ENCODE measurements at regions of chr4 and their contacts with region 1.

Region 1: DNA sequence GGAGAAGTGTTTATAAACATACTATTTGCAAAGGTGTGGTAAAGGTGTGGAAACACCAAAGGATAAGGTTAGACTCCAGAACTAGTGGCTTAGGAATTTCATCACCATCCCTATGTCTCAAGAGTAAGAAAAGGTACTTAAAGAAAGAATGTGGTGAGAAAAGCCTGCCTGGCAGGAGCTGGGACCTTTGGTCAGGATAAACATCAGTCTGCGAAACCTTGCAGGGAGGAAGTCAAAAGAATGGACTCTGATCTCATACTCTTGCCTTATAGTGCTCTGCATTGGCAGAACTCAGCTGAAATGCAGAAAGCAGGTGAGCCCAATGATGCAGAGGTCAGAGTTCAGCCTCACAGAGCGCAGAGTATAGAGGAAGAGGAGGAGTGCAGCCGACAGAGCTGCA is 97.2 kb upstream of the NR3C2 start:
- DNase-seq: peak; percentile 64 to 73
- H3K4me3 ChIP-seq: no peak overlapping the region
- H3K4me3 Mint-ChIP-seq: no peak overlapping the region
- H3K27ac Mint-ChIP-seq: no peak overlapping the region
- H3K4me1 ChIP-seq: peaks cover 10% of the 10 kb centered on the region
- H3K4me1 Mint-ChIP-seq: no peaks in the 10 kb centered on the region
- H3K27me3 ChIP-seq: no peaks in the 10 kb centered on the region
- H3K27me3 Mint-ChIP-seq: no peaks in the 10 kb centered on the region
- CTCF ChIP-seq: no peak

Region 2: GRCh38 chr4:148454835-148455234 is 84.6 kb before region 1 on chr4:
- CTCF ChIA-PET with region 1: no interaction called
- POLR2A ChIA-PET with region 1: no interaction called
- intact Hi-C with region 1: no loop called
- DNase-seq: no peak
- H3K4me3 ChIP-seq: no peak overlapping the region
- H3K4me3 Mint-ChIP-seq: no peak overlapping the region
- H3K27ac Mint-ChIP-seq: no peak overlapping the region
- H3K4me1 ChIP-seq: no peaks in the 10 kb centered on the region
- H3K4me1 Mint-ChIP-seq: no peaks in the 10 kb centered on the region
- H3K27me3 ChIP-seq: no peaks in the 10 kb centered on the region; the same call in 1 of the 2 replicates
- H3K27me3 Mint-ChIP-seq: peaks cover 7% of the 10 kb centered on the region
- CTCF ChIP-seq: no peak

Region 3: DNA sequence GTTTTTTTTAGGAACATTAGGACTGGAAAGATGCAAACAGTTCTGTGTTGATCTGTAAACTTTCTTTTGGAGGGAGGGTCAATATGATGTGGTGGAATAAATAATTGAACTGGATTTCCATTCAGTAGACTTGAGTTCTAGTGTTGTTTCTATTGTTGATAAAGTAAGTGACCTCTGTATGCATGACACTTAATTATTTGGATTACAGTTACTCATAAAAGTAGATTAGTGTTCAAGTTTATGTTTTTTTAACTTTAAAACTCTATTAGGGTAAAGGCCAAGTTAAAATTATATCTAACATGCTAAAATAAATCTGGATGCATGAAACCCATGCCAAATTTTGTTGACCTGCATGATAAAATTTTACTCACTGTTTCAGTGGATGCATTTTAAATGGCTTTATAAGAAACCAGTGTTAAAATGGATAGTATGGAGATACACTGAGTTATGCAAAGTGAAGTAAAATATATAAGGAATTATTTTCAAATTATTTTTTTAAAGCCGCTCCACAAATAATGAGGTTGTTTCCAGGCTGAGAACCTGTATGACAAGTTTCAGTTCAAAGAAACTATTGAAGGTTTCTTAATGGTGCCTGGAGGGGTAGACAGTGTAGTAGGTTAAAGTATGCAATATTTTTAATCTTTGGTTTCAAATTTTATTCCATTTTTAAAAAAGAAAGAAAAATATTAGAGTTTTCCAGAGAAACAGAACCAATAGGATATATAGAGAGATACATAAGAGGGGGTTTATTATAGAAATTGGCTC is 11.6 kb before region 1 on chr4:
- CTCF ChIA-PET with region 1: no interaction called
- POLR2A ChIA-PET with region 1: no interaction called
- intact Hi-C with region 1: no loop called
- DNase-seq: no peak
- H3K4me3 ChIP-seq: no peak overlapping the region
- H3K4me3 Mint-ChIP-seq: no peak overlapping the region
- H3K27ac Mint-ChIP-seq: no peak overlapping the region
- H3K4me1 ChIP-seq: no peaks in the 10 kb centered on the region
- H3K4me1 Mint-ChIP-seq: no peaks in the 10 kb centered on the region
- H3K27me3 ChIP-seq: no peaks in the 10 kb centered on the region
- H3K27me3 Mint-ChIP-seq: no peaks in the 10 kb centered on the region
- CTCF ChIP-seq: no peak

Region 4: GRCh38 chr4:148787831-148788477 is 248.6 kb after region 1 on chr4:
- CTCF ChIA-PET with region 1: no interaction called
- POLR2A ChIA-PET with region 1: no interaction called
- intact Hi-C with region 1: loop called (anchors 10 kb)
- DNase-seq: peak in 1 of 2 experiments; percentile 7
- H3K4me3 ChIP-seq: no peak overlapping the region
- H3K4me3 Mint-ChIP-seq: no peak overlapping the region
- H3K27ac Mint-ChIP-seq: no peak overlapping the region
- H3K4me1 ChIP-seq: peaks cover 12% of the 10 kb centered on the region
- H3K4me1 Mint-ChIP-seq: peaks cover 7% of the 10 kb centered on the region
- H3K27me3 ChIP-seq: no peaks in the 10 kb centered on the region
- H3K27me3 Mint-ChIP-seq: no peaks in the 10 kb centered on the region
- CTCF ChIP-seq: no peak

Measured in Caco-2 (cell line).